Activated CD8-positive, alpha-beta memory T cell treated with anti-CD3 and anti-CD28 coated beads, Interleukin-2, amount 10 ng/mL, durations not matched to agents 7 days and 5 days (primary cell): ENCODE measurements at regions of chr7 and their contacts with region 1.

Region 1: GRCh38 chr7:98420966-98421612 is 20.2 kb upstream of the BAIAP2L1 start:
- DNase-seq: peak; percentile 60
- ATAC-seq: peak; percentile 71
- H3K4me3 Mint-ChIP-seq: no peak overlapping the region
- H3K27ac Mint-ChIP-seq: no peak overlapping the region
- H3K4me1 Mint-ChIP-seq: peaks cover 2% of the 10 kb centered on the region
- H3K27me3 Mint-ChIP-seq: peaks cover 3% of the 10 kb centered on the region

Region 2: DNA sequence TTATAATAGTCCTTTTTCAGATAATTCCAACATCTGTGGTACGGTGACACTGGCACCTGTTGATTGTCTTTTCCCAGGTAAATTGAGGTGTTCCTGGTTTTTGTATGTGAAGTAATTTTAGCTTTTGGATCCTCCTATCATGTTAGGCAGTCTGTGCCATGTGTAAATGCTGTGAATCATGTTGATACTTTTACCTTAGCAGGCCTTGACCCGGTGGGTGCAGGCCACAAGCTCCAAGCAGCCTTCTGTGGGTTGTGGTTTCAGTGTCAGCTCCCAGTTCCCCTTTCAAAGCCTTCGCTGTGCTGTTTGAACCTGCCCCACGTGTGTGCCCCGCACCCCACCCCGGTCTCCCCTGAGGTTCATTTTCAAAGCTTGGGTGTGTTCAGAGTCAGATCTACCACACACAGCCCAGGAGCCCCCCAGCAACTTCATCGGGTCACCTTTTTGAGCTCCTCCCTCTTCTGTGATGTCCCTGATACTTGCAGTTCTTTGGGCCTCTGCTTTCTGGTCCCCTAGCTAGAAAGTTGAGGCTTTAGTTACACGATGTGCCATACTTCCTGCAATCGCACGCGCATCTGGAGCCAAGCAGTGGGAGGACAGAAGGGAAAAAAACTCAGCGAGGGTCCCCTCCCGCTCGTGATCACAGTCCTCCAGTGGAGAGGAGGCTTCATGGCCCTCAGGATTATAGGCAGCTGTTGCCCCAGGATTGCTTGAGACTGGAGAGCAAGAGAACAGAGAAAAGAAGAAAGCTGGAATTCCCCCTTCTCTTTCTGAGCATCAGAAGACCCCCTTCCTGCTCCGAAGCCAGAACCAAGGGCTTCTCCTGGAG is 218.5 kb before region 1 on chr7:
- CTCF ChIA-PET with region 1: no interaction called
- DNase-seq: peak; percentile 92
- ATAC-seq: peak; percentile 90
- H3K4me3 Mint-ChIP-seq: peak overlapping the region; percentile 54
- H3K27ac Mint-ChIP-seq: peak overlapping the region; percentile 84
- H3K4me1 Mint-ChIP-seq: peaks cover 48% of the 10 kb centered on the region
- H3K27me3 Mint-ChIP-seq: no peaks in the 10 kb centered on the region

Region 3: GRCh38 chr7:98348709-98349474 is 72.2 kb before region 1 on chr7:
- CTCF ChIA-PET with region 1: no interaction called
- DNase-seq: no peak
- ATAC-seq: no peak
- H3K4me3 Mint-ChIP-seq: no peak overlapping the region
- H3K27ac Mint-ChIP-seq: no peak overlapping the region
- H3K4me1 Mint-ChIP-seq: peaks cover 10% of the 10 kb centered on the region
- H3K27me3 Mint-ChIP-seq: peaks cover 11% of the 10 kb centered on the region

Region 4: GRCh38 chr7:98483276-98483965 is 62.3 kb after region 1 on chr7:
- CTCF ChIA-PET with region 1: no interaction called
- DNase-seq: no peak
- ATAC-seq: no peak
- H3K4me3 Mint-ChIP-seq: no peak overlapping the region
- H3K27ac Mint-ChIP-seq: no peak overlapping the region
- H3K4me1 Mint-ChIP-seq: no peaks in the 10 kb centered on the region
- H3K27me3 Mint-ChIP-seq: no peaks in the 10 kb centered on the region

Region 5: DNA sequence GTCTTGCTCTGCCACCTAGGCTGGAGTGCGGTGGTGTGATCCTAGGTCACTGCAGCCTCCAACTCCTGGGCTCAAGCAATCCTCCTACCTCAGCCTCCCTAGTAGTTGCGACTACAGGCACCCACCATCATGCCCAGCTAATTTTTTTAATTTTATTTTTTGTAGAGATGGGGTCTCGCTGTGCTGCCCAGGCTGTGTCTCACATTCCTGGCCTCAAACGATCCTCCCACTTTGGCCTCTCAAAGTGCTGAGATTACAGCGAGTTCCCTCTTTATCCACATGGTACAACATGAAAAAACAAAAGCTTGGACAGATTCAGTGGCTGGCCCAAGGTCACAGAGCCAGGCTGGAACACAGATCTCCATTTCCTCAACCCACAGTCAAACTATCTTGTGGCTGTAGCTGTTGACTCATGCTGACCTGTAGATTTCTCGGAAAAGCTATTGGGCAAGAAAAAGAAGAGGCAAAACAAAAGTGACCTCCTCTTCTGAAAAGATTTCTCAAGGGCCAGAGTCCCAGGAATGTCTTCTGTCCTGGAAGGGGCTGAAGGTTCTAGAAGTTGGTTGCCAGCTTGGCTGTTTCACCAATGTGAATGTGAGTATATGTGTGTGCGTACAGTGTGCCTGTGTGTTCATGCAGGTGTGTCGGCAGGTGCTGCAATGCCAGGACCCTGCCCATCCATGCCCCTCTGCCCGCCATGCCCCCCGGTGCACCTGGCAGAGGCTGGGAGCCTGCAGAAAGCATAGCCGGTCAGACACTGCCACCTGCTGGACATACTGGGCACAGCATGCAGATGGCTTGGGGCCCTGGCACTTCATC is 420.3 kb after region 1 on chr7:
- CTCF ChIA-PET with region 1: interaction called, 20 read pairs
- DNase-seq: peak; percentile 72
- ATAC-seq: peak; percentile 68
- H3K4me3 Mint-ChIP-seq: no peak overlapping the region
- H3K27ac Mint-ChIP-seq: no peak overlapping the region
- H3K4me1 Mint-ChIP-seq: no peaks in the 10 kb centered on the region
- H3K27me3 Mint-ChIP-seq: peaks cover 6% of the 10 kb centered on the region